AG04449 (cell line): ENCODE measurements at regions of chr5 and their contacts with region 1.

Region 1: DNA sequence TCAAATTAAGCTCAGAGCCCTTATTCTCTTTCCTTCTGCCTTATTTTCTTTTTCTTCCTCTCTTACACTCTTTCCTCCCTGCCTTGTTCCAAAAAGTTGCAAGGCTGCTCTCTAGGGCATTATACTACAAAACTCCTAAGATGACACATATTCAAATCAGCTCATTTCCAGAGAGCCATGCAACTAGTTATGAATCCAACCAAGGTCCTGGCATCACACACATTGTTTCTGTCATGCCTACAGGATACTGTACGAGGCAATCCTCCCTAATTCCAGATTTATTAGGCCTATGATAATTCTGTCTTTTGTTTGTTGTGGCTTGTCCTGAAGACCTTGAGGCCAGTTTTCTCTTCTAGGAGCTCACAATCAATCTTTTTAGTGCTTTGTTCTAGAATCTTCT is 87.0 kb upstream of the TBCA start:
- DNase-seq: no peak
- H3K4me3 ChIP-seq: no peak overlapping the region
- CTCF ChIP-seq: no peak

Region 2: DNA sequence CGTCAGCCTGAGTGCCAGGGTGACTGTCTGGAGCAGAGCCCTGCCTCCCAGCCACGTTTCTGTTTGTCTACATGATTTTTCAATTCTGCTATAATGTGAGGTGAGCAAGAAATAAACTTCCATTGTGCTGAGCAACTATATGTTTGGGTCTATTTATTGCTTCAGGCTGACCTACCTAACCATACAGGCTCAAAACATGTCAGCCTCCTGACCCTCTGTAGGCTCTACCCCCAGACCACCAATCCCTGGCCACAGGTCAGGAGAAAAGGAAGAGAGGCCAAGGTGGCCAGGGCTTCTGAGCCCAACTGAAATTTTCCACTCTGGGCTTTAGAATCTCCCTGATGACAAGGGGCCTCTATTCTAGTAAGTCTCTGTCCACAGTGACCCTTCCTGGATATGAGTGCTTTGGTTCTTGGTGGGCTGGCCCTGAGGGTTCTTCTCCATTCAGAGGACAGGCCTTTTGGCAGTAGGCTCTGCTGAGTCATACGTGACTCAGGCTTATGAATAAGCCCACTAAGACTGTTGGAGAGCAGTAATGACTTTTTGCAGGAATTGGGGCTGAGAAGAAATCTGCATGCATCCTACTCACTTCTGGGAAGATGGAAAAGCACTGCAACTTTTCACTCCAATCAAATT is 30.2 kb after region 1 on chr5:
- CTCF ChIA-PET with region 1: no interaction called
- POLR2A ChIA-PET with region 1: no interaction called
- DNase-seq: peak; percentile 84
- H3K4me3 ChIP-seq: no peak overlapping the region
- CTCF ChIP-seq: no peak

Region 3: DNA sequence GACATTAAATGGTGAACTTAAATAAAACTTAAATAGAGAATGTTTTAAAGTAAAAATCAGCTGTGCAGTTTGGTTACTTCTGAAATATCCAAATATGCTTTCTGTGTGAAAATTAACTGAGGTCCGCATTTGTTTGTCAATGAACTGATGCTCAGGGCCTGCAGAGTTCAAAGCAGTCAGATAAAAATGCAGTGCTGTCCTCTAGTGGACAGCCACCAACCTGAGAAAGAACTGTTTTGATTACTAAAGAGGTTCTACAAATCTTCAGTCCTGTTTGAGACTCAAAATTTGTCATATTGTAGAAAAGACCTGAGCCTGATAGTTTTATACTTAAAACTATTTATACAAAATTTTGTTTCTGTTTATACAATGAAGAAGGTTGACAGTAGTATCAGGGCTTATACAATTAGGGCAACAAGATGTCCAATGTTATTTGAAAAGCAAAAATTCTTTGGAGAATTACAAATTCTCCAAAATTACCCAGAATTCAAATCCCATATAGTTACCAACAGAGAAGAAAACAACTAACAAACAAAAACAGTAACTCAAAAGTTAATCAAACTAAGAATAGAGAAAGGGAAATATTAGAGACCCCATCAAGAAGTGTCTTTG is 145.3 kb after region 1 on chr5:
- CTCF ChIA-PET with region 1: interaction called, 15 read pairs
- POLR2A ChIA-PET with region 1: no interaction called
- DNase-seq: no peak
- H3K4me3 ChIP-seq: no peak overlapping the region
- CTCF ChIP-seq: peak; percentile 69